ENCODE measurements at regions of chr1 and their contacts with region 1.

Region 1: GRCh38 chr1:65431111-65431705 is 10.7 kb downstream of the LEPR start:
- DNase-seq: peak in 2 of 9 experiments; percentile 38 to 45
- ATAC-seq: peak; percentile 55
- H3K4me3 ChIP-seq: no peak overlapping the region
- H3K4me3 Mint-ChIP-seq: no peak overlapping the region
- H3K27ac ChIP-seq: no peak overlapping the region
- H3K27ac Mint-ChIP-seq: no peak overlapping the region
- H3K4me1 ChIP-seq: no peaks in the 10 kb centered on the region
- H3K4me1 Mint-ChIP-seq: no peaks in the 10 kb centered on the region
- H3K27me3 ChIP-seq: no peaks in the 10 kb centered on the region
- H3K27me3 Mint-ChIP-seq: no peaks in the 10 kb centered on the region
- CTCF ChIP-seq: peak; percentile 70

Region 2: DNA sequence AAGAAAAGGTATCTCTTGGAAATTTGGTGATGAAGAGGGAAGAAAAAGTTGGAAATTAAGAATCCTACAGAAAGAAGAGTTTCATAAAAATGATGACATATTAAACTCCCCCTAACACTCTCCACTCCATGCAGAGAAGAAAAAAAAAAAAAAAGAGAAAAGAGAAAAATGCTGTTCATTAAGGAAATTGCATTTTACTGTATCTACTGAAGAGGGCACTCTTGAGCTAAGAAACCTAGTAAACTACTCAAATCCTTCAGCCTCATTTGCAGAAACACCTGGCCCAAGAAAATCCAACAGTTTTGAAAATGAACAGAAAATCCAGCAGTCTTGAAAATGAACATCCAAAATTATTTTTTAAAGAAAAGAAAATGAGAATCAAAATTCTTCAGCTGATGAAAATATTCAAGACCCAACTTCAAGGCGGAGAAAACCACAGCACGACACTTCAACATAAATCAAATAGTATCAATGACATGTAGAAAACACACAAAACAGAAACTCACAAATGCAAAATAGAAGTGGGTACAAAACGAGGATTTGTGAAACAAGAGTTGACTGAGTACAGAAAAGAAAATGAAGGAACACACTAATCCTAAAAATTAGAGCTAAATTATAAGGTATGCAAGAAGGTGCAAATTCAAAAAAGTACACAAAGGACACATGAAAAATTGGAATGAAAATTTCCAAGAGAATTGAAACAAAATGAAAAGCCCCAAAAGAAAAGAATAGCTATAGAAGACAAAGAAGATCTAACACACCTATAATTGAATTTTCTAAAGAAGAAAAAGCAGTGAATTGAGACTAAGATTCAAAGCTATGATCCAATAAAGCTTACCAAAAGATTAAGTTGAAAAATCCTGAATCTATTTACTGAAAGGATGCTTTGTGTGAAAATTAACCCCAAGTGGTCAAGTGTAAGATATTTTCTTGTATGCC is 195.1 kb before region 1 on chr1:
- CTCF ChIA-PET with region 1: interaction called, 3 read pairs
- POLR2A ChIA-PET with region 1: no interaction called
- intact Hi-C with region 1: loop called in 1 of 2 experiments (anchors 10 kb)
- DNase-seq: peak in 2 of 9 experiments; percentile 53 to 56
- ATAC-seq: no peak
- H3K4me3 ChIP-seq: no peak overlapping the region
- H3K4me3 Mint-ChIP-seq: no peak overlapping the region
- H3K27ac ChIP-seq: no peak overlapping the region
- H3K27ac Mint-ChIP-seq: no peak overlapping the region
- H3K4me1 ChIP-seq: no peaks in the 10 kb centered on the region
- H3K4me1 Mint-ChIP-seq: no peaks in the 10 kb centered on the region
- H3K27me3 ChIP-seq: no peaks in the 10 kb centered on the region
- H3K27me3 Mint-ChIP-seq: peaks cover 21% of the 10 kb centered on the region
- CTCF ChIP-seq: peak; percentile 33

Region 3: GRCh38 chr1:65393347-65393746 is 37.9 kb before region 1 on chr1:
- CTCF ChIA-PET with region 1: no interaction called
- POLR2A ChIA-PET with region 1: no interaction called
- intact Hi-C with region 1: no loop called
- DNase-seq: no peak
- ATAC-seq: no peak
- H3K4me3 ChIP-seq: no peak overlapping the region
- H3K4me3 Mint-ChIP-seq: no peak overlapping the region
- H3K27ac ChIP-seq: no peak overlapping the region
- H3K27ac Mint-ChIP-seq: no peak overlapping the region
- H3K4me1 ChIP-seq: no peaks in the 10 kb centered on the region
- H3K4me1 Mint-ChIP-seq: no peaks in the 10 kb centered on the region
- H3K27me3 ChIP-seq: no peaks in the 10 kb centered on the region
- H3K27me3 Mint-ChIP-seq: no peaks in the 10 kb centered on the region
- CTCF ChIP-seq: no peak

Region 4: DNA sequence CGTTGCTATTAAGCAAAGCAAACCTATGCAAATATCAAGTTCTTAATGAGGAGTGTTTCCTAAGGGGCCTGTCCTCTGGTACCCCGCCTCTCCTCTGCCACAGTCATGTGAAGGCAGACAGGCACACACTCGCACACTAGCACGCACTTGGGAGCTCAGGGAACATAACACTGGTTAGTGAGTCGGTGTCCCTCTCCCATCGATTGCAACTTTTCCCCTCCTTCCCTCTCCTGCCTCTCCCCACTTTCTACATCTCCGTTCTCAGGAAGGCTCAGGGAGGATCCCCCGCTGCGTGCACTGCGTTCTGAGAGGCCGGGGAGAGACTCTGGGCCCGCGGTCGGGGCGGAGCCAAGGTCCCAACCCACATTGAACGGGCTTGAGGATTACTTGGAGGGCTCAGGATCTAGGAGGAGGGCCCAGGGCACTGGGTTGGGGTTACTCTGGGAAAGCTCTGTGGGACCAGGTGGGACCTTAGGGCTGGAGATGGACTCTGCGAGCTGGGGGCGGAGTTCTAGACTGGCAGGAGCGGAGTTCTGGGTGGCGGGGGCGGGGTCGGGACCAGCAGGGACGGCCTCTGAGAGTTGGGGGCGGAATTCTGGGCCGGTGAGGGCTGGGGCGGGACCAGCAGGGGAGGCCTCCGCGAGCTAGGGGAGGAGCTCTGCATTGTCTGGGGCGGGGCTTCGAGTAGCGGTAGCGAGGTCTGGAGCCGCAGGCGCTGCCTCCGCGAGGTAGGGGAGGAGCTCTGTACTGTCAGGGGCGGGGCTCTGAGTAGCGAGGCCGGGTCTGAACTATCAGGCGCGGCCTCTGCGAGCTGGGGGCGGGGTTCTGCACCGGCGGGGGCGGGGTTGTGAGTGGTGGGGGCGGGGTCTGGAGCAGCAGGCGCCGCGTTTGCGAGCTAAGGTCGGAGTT is 11.3 kb before region 1 on chr1:
- CTCF ChIA-PET with region 1: interaction called, 10 read pairs
- POLR2A ChIA-PET with region 1: interaction called, 3 read pairs
- intact Hi-C with region 1: no loop called
- DNase-seq: peak; percentile 97 to 99 (median 98)
- ATAC-seq: peak; percentile 94
- H3K4me3 ChIP-seq: peak overlapping the region; percentile 96 to 98
- H3K4me3 Mint-ChIP-seq: no peak overlapping the region
- H3K27ac ChIP-seq: peak overlapping the region; percentile 69 to 71
- H3K27ac Mint-ChIP-seq: peak overlapping the region; percentile 93
- H3K4me1 ChIP-seq: peaks cover 15% of the 10 kb centered on the region
- H3K4me1 Mint-ChIP-seq: peaks cover 21% of the 10 kb centered on the region
- H3K27me3 ChIP-seq: peaks cover 0 to 3% of the 10 kb centered on the region in 2 experiments
- H3K27me3 Mint-ChIP-seq: no peaks in the 10 kb centered on the region
- CTCF ChIP-seq: no peak

Region 5: DNA sequence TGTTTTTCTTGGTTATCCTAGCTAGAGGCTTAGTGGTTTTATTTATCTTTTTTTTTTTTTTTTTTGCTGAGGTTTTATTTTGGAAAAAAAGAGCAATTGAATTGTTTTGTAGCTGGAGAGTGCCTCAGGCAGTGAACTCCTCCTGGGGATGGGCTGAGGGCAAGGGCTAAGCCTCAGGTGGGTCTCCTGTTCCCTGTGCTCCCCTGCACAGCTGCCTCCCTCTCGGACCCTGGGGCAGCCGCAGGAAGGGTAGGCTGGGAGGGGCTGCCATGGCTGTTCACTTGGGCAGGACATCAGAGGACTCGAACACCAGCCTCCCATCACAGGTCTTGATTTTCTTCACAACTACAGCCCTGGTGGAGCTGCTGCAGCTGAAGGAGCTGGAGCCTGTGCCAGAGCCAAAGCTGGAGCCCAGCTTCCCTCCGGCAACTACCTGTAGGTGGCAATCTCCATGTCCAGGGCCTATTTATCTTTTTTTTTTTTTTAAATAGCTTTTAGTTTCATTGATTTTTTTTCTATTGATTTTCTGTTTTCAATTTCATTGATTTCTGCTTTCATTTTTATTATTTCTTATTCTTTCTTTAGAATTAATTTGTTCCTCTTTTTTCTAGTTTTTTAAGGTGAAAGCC is 18.1 kb after region 1 on chr1:
- CTCF ChIA-PET with region 1: no interaction called
- POLR2A ChIA-PET with region 1: no interaction called
- intact Hi-C with region 1: no loop called
- DNase-seq: no peak
- ATAC-seq: no peak
- H3K4me3 ChIP-seq: no peak overlapping the region
- H3K4me3 Mint-ChIP-seq: no peak overlapping the region
- H3K27ac ChIP-seq: no peak overlapping the region
- H3K27ac Mint-ChIP-seq: no peak overlapping the region
- H3K4me1 ChIP-seq: no peaks in the 10 kb centered on the region
- H3K4me1 Mint-ChIP-seq: no peaks in the 10 kb centered on the region
- H3K27me3 ChIP-seq: no peaks in the 10 kb centered on the region
- H3K27me3 Mint-ChIP-seq: no peaks in the 10 kb centered on the region
- CTCF ChIP-seq: no peak

Region 6: DNA sequence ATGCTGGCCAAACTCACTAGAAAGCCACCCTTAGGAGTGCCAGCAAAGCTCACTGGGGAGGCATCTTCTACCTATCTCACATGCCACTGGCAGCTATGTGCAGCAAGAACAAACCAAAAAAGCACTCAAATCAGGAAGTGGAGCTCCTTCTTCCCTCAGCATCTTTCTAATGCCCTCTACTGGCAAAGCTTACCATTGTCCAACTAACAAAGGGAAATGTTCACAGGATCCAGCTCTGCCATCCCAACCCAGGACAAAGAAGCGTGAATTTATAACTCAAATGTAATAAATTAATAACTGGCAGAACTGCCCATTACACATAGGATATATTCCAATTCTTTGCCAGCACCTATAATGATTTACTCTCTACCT is 28.2 kb after region 1 on chr1:
- CTCF ChIA-PET with region 1: interaction called, 15 read pairs
- POLR2A ChIA-PET with region 1: no interaction called
- intact Hi-C with region 1: no loop called
- DNase-seq: peak in 2 of 9 experiments; percentile 8 to 10
- ATAC-seq: no peak
- H3K4me3 ChIP-seq: no peak overlapping the region
- H3K4me3 Mint-ChIP-seq: no peak overlapping the region
- H3K27ac ChIP-seq: no peak overlapping the region
- H3K27ac Mint-ChIP-seq: no peak overlapping the region
- H3K4me1 ChIP-seq: no peaks in the 10 kb centered on the region
- H3K4me1 Mint-ChIP-seq: peaks cover 27% of the 10 kb centered on the region
- H3K27me3 ChIP-seq: no peaks in the 10 kb centered on the region
- H3K27me3 Mint-ChIP-seq: no peaks in the 10 kb centered on the region
- CTCF ChIP-seq: no peak

Region 7: GRCh38 chr1:65539266-65540131 is 108.3 kb after region 1 on chr1:
- CTCF ChIA-PET with region 1: no interaction called
- POLR2A ChIA-PET with region 1: no interaction called
- intact Hi-C with region 1: no loop called
- DNase-seq: no peak
- ATAC-seq: no peak
- H3K4me3 ChIP-seq: no peak overlapping the region
- H3K4me3 Mint-ChIP-seq: no peak overlapping the region
- H3K27ac ChIP-seq: no peak overlapping the region
- H3K27ac Mint-ChIP-seq: no peak overlapping the region
- H3K4me1 ChIP-seq: no peaks in the 10 kb centered on the region
- H3K4me1 Mint-ChIP-seq: peaks cover 1% of the 10 kb centered on the region
- H3K27me3 ChIP-seq: no peaks in the 10 kb centered on the region
- H3K27me3 Mint-ChIP-seq: no peaks in the 10 kb centered on the region
- CTCF ChIP-seq: no peak